ENCODE measurements at regions of chr14 and their contacts with region 1.

Region 1: DNA sequence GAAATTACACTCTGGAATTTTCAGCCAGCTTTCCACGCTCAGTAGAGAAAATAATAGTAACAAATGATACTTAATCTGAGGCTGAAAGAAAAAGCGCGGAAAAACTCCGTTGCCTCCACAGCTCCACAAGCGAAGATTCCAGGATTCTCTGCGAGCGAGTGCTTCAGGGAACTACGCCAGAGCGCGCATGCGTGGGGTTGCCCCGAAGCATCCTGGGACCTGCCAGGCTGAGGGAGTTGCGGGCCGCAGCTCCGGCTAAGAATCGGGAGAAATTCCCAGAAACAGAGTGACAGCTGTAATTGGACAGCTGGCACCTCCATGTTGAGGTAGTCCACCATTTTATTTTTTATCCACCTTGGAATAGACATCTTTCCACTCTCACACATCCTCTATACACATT is 12.0 kb upstream of the TTC5 start:
- DNase-seq: no peak
- H3K4me3 ChIP-seq: no peak overlapping the region
- CTCF ChIP-seq: no peak

Region 2: GRCh38 chr14:20332788-20333493 is 15.2 kb after region 1 on chr14 and contains the start of gene CCNB1IP1:
- CTCF ChIA-PET with region 1: interaction called, 24 read pairs
- POLR2A ChIA-PET with region 1: no interaction called
- DNase-seq: peak; percentile 67
- H3K4me3 ChIP-seq: peak within 1 kb of the TSS; percentile 76
- CTCF ChIP-seq: no peak

Region 3: DNA sequence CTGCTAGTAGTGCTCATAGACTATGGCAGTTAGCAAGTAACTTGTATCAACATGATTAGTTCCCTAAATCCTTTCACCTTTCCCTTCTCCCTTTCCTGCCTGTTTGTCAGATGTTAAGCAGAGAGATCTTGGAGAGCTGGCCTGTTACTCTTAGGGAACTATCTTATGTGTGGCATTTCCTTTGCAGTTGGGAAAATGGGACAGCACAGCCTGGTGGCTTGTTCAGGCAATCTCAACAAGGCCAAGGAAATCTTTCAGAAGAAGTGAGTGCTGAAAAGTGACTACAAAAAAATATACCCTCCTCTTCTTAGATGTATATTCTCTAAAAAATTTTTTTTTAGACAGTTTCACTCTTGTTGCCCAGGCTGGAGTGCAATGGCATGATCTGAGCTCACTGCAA is 33.1 kb after region 1 on chr14:
- CTCF ChIA-PET with region 1: no interaction called
- POLR2A ChIA-PET with region 1: no interaction called
- DNase-seq: no peak
- H3K4me3 ChIP-seq: no peak overlapping the region
- CTCF ChIP-seq: peak; percentile 24